Pancreas (tissue), 10 donors: ENCODE measurements at regions of chr20 and their contacts with region 1.

Region 1: GRCh38 chr20:4082406-4083097 is 67.2 kb upstream of the RNF24 start:
- DNase-seq: peak in 2 of 6 donors; percentile 21 to 59
- ATAC-seq: peak in 3 of 4 donors; percentile 15 to 50 (median 20)
- H3K4me3 ChIP-seq: no peak overlapping the region
- H3K27ac ChIP-seq: peak overlapping the region in 2 of 4 donors; percentile 9 to 50
- H3K4me1 ChIP-seq: peaks cover 0 to 3% (median 0%) of the 10 kb centered on the region in 3 donors
- H3K27me3 ChIP-seq: no peaks in the 10 kb centered on the region
- CTCF ChIP-seq: no peak

Region 2: DNA sequence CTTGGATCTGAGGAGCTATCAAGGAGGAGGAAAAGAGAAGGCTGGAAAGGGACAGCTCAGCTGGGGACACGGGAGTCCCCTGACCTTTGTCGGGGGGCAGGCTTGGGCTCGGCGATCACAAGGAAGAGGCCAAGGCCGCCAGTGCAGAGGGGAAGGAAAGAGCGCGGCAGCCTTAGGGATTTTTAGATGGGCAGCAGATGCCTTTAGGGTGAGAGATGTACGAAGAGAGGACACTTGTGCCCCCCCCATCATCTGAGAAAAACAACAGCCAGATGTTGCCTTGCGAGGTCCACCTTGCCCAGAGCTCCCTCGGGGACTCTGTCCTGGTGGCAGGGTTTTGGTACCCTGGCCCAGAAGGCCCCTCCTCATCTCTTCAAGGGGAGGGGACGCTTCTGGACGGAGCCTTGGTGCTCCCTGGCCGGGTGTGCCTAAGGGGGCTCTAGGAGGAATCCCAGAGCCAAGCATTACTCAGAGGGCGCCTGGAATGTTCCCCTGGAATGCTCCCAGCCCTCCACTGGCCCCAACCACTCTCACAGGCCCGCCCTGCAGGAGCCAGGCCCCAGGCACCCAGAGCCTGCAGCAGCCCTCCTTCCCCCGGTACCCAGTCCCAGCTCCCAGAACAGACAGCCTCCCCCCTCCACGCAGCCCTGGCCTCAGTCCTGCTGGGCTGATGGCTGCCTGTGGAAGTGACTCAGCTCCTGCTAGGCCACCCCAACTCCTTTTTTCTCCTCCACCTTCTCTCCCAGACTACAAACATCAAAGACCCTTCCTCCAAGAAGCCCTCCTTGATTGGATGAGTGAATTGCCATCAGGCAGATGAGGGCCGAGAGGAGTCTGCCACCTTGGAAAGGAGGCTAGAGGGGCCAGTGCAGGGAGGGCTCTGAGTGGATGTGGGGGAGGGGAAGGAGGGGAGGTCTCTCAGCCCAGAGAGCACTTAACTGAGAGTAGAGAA is 402.5 kb before region 1 on chr20:
- intact Hi-C with region 1: loop called in 1 of 3 experiments (anchors 10 kb)
- DNase-seq: no peak
- ATAC-seq: peak in 1 of 4 donors; percentile 5
- H3K4me3 ChIP-seq: no peak overlapping the region
- H3K27ac ChIP-seq: no peak overlapping the region
- H3K4me1 ChIP-seq: peaks cover 0 to 4% (median 3%) of the 10 kb centered on the region in 3 donors
- H3K27me3 ChIP-seq: peaks cover 0 to 16% (median 0%) of the 10 kb centered on the region in 4 donors
- CTCF ChIP-seq: no peak

Region 3: DNA sequence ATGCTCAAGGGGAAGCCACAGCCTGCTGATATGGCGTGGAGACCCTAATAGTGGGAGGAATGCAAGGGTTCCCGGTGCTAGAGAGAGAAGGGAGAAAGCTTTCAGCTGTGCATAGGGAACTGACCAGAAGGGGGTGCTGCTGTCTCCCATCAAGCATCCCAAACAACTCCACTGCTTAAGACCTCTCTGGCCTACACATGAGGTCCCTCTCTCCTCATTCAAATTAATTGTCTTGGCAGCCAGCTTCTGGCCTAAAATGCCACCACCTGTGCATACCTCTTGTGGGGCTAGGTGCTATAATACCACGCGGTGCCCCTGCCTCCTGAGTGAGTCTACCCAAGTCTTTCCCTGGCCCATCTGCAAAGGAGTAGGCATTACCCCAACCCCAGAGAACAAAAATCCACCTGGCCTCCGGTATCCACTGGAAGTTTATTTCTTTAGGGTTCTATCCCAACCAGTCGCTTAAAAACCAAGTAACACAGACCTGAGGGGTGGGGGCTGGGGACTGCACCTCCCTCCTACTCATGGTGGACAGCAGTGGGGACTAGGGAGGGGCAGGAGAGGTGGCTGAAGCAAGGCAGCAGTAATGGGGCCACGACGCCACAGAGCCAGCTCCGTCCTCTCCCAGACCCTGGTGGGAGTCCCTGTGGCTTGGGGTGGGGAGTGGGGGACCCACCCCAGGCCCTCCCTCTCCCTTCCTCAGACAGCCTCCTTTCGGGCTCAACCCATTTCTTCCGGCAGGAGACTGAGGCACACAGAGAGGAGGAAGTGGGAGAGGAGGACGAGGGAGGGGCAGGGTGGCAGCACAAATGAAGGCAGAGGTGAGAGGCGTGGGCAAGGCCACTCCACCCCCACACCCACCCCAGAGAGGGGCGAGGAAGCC is 329.2 kb before region 1 on chr20:
- intact Hi-C with region 1: loop called in 1 of 3 experiments (anchors 10 kb)
- DNase-seq: peak in 3 of 6 donors; percentile 31 to 63 (median 41)
- ATAC-seq: peak; percentile 43 to 84 (median 76)
- H3K4me3 ChIP-seq: no peak overlapping the region
- H3K27ac ChIP-seq: no peak overlapping the region
- H3K4me1 ChIP-seq: peaks cover 0 to 6% (median 5%) of the 10 kb centered on the region in 3 donors
- H3K27me3 ChIP-seq: peaks cover 0 to 8% (median 0%) of the 10 kb centered on the region in 4 donors
- CTCF ChIP-seq: peak; percentile 40 to 68 (median 51)

Region 4: DNA sequence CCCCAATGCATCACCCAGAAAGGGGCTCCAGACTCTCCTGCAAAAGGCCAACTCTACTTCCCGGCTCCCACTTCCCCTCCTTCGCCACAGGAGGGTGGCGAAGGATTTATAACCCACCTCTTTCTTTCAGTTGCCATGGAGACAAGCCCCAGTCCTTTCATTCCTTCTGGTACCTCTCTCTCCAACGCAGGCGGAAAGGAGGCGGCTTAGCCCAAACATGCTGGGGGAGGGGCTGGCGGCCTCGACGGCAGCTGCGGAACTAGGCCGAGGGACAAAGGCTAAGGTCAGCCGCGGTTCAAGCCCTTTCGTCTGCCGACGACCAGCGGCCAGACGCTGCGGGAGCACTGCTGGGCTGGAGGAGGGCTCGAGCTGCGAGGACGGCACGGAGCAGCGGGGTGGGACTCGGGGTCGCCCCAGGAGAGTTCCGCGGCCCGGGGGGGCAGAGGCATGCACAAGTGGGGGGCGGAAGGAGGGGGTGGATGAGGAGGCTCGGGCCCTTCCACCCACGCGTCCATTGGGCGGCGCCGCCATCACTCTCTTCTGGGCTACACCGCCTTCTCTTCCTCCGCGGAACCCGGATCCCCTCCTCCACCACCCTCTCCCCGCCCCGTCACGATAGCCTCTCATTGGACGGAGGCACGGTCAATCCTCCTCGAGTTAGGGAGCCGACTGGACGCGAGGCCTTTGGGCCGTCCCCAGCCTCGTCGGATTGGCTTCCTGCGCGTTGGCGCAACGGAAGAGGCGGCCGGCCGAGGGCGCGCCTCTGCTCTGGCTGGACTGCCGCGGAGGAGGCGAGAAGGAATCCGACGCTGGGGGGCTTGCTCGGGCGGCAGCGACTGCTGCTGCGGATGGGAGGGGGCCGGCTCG is 193.7 kb before region 1 on chr20 and contains the start of gene PANK2:
- intact Hi-C with region 1: loop called in 1 of 3 experiments (anchors 10 kb)
- DNase-seq: peak; percentile 94 to 99 (median 99)
- ATAC-seq: peak; percentile 94 to 99 (median 96)
- H3K4me3 ChIP-seq: peak within 1 kb of the TSS; percentile 85 to 99 (median 95)
- H3K27ac ChIP-seq: peak within 1 kb of the TSS; percentile 85 to 88 (median 88)
- H3K4me1 ChIP-seq: peaks cover 0 to 23% (median 11%) of the 10 kb centered on the region in 3 donors
- H3K27me3 ChIP-seq: no peaks in the 10 kb centered on the region
- CTCF ChIP-seq: peak in 1 of 4 donors; percentile 19
- total RNA-seq, gene PANK2: 10.1 to 18.0 (median 12.5) TPM